CD4-positive, alpha-beta memory T cell (primary cell): ENCODE measurements at regions of chr21 and their contacts with region 1.

Region 1: GRCh38 chr21:33572350-33572749 is 16.1 kb downstream of the DONSON start:
- DNase-seq: no peak
- H3K4me3 ChIP-seq: no peak overlapping the region
- H3K4me3 Mint-ChIP-seq: no peak overlapping the region
- H3K27ac ChIP-seq: no peak overlapping the region
- H3K27ac Mint-ChIP-seq: peak overlapping the region in 6 of 7 donors; percentile 5 to 78 (median 47)
- H3K4me1 ChIP-seq: peaks cover 10% of the 10 kb centered on the region
- H3K4me1 Mint-ChIP-seq: peaks cover 8 to 25% (median 15%) of the 10 kb centered on the region in 4 donors
- H3K27me3 ChIP-seq: no peaks in the 10 kb centered on the region
- H3K27me3 Mint-ChIP-seq: no peaks in the 10 kb centered on the region

Region 2: GRCh38 chr21:33552093-33552998 is 20.0 kb before region 1 on chr21:
- CTCF ChIA-PET with region 1: interaction called, 3 read pairs
- POLR2A ChIA-PET with region 1: no interaction called
- intact Hi-C with region 1: loop called (anchors 2 kb)
- DNase-seq: peak in 1 of 5 donors; percentile 28
- H3K4me3 ChIP-seq: no peak overlapping the region
- H3K4me3 Mint-ChIP-seq: peak overlapping the region in 1 of 8 donors; percentile 49
- H3K27ac ChIP-seq: no peak overlapping the region
- H3K27ac Mint-ChIP-seq: peak overlapping the region in 3 of 7 donors; percentile 37 to 78 (median 68)
- H3K4me1 ChIP-seq: peaks cover 32% of the 10 kb centered on the region
- H3K4me1 Mint-ChIP-seq: peaks cover 29 to 57% (median 45%) of the 10 kb centered on the region in 4 donors
- H3K27me3 ChIP-seq: no peaks in the 10 kb centered on the region
- H3K27me3 Mint-ChIP-seq: no peaks in the 10 kb centered on the region

Region 3: GRCh38 chr21:33668180-33668579 is 95.8 kb after region 1 on chr21:
- CTCF ChIA-PET with region 1: no interaction called
- POLR2A ChIA-PET with region 1: no interaction called
- intact Hi-C with region 1: no loop called
- DNase-seq: no peak
- H3K4me3 ChIP-seq: no peak overlapping the region
- H3K4me3 Mint-ChIP-seq: no peak overlapping the region
- H3K27ac ChIP-seq: no peak overlapping the region
- H3K27ac Mint-ChIP-seq: no peak overlapping the region
- H3K4me1 ChIP-seq: no peaks in the 10 kb centered on the region
- H3K4me1 Mint-ChIP-seq: no peaks in the 10 kb centered on the region
- H3K27me3 ChIP-seq: no peaks in the 10 kb centered on the region
- H3K27me3 Mint-ChIP-seq: peaks cover 1% of the 10 kb centered on the region in 2 donors